OCI-LY7 (cell line): ENCODE measurements at regions of chr15 and their contacts with region 1.

Region 1: GRCh38 chr15:44130778-44131177 is 64.3 kb downstream of the FRMD5 start:
- DNase-seq: no peak
- H3K4me3 ChIP-seq: no peak overlapping the region
- H3K27ac ChIP-seq: no peak overlapping the region
- H3K4me1 ChIP-seq: no peaks in the 10 kb centered on the region
- CTCF ChIP-seq: no peak

Region 2: DNA sequence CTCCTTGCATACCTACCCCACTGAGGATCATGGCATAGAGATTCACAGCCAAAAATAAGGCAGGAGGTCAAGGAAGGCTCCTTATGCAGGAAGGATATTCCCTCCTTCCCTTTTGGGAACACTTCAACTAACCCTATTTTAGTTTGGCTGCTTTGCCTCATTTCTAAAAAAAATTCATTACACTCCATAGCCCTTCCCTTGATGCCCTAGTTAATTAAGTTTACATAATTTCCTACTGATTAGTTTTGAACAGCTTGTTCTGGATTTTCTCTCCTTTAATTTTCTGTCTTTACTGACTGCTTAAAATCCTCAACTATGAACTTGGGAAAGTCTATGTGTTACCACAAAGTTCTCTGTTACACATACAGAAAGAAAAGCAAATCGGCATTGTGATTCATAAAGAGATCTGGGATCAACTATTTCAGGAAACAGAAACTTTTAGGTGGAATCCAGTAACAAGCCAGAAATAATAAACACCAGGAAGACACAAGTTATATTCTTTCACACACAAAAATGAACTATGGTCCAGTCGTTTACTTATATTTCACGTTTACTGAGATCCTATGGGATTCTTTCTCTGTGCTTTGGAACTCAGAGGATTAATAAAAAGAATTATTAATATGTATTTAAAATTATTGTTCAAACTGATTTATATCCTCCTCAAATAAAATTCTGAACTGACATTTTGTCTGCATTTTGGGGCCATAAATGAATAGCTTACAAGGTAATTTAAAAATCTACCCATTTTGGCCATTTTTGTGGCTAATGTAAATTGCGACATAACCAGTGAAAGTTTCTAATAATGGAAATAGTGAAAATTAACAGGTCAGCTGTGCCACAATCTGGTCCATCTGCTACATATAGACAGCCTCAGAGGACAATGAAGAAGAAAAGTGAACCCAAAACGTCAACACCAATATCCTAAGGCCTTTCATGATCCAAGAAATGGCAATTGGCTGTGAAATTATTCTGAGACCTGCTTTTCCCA is 49.5 kb before region 1 on chr15:
- CTCF ChIA-PET with region 1: no interaction called
- POLR2A ChIA-PET with region 1: no interaction called
- intact Hi-C with region 1: loop called (anchors 5 kb)
- DNase-seq: no peak
- H3K4me3 ChIP-seq: no peak overlapping the region
- H3K27ac ChIP-seq: no peak overlapping the region
- H3K4me1 ChIP-seq: no peaks in the 10 kb centered on the region
- CTCF ChIP-seq: no peak